ENCODE measurements at regions of chr7 and their contacts with region 1.

Region 1: GRCh38 chr7:145009876-145010275 is 174.0 kb upstream of the TPK1 start:
- DNase-seq: no peak
- H3K4me3 ChIP-seq: no peak overlapping the region
- H3K27ac ChIP-seq: no peak overlapping the region
- H3K4me1 ChIP-seq: no peaks in the 10 kb centered on the region
- CTCF ChIP-seq: no peak

Region 2: DNA sequence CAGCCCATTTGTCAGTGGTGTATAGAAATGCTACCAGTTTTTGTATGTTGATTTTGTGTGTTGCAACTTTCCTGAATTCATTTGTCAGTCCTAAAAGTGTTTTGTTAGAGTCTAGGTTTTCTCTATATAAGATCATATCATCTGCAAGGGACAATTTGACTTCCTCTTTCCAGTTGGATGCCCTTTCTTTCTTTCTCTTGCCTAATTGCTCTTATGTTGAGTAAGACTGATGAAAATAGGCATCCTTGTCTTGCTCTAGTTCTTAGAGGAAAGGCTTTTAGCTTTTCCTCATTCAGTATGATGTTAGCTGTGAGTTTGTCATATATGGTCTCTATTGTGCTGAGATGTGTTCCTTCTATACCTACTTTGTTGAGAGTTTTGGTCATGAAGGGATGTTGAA is 12.4 kb before region 1 on chr7:
- CTCF ChIA-PET with region 1: no interaction called
- POLR2A ChIA-PET with region 1: interaction called, 12 read pairs
- intact Hi-C with region 1: no loop called
- DNase-seq: no peak
- H3K4me3 ChIP-seq: no peak overlapping the region
- H3K27ac ChIP-seq: no peak overlapping the region
- H3K4me1 ChIP-seq: no peaks in the 10 kb centered on the region
- CTCF ChIP-seq: no peak

Region 3: DNA sequence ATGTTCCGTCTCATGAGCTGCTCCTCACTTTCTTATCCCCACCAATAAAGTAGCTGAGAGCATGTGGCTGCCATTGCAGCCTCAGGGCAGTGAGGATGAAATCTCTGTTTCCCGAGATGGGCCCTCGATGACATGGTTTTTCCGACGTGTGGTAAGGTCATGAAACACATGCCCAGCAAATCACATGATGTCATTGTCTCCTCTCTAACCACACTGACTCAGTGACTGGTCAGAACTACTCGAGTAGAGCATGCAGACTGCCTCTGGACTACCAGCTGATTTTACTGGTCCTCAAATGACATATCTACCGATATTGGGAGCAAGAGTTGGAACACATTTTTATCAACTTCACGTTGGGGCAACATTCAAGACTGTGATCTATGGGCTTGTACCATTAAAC is 1892.9 kb after region 1 on chr7:
- CTCF ChIA-PET with region 1: no interaction called
- POLR2A ChIA-PET with region 1: no interaction called
- intact Hi-C with region 1: no loop called
- DNase-seq: no peak
- H3K4me3 ChIP-seq: no peak overlapping the region
- H3K27ac ChIP-seq: no peak overlapping the region
- H3K4me1 ChIP-seq: no peaks in the 10 kb centered on the region
- CTCF ChIP-seq: no peak

Measured in OCI-LY7 (cell line).